Cardiac septum (tissue), 1 donor: ENCODE measurements at regions of chr17 and their contacts with region 1.

Region 1: DNA sequence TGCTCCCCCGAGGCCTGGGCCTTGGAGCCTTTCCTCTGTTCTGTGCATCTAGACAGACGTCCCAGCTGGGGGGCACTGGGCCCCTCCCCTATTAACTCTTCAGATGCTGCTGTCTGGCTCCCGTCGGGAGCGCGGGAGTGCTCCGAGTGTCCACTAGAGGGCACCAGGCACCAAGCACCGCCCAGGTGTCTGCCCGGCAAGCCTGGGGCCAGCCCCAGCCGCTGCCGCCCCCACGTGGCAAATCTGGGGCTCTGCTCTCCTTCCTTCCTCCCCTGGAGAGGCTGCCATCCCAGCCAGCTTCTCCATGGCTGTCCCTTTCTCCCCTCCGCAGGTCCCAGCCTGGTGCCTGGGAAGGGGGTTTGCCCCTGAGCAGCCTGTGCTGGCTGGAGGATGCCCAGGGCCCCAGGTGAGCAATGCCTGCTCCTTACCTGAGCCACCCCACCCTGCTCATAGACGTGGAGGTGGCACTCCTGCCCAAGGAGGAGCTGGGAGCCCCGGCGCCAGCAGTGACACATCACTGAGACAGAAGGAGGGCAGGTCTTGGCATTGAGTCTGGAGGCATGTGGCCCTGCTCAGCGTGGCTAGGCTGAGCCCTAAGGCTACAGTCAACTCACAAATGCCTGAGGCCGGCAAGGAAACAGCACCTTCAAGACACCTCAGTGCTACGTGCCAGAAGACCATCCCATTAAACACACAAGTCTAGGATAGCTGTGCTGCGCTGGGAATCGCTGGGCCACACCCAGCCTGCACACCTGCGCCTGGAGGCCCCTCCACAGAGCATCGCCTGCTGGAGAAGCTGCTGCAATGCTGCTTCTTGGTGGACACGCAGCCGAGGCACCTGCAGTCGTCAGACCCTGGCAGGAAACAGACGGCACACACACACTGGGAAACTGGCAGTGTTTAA is 19.7 kb downstream of the TMEM235 start:
- DNase-seq: peak; percentile 95

Region 2: DNA sequence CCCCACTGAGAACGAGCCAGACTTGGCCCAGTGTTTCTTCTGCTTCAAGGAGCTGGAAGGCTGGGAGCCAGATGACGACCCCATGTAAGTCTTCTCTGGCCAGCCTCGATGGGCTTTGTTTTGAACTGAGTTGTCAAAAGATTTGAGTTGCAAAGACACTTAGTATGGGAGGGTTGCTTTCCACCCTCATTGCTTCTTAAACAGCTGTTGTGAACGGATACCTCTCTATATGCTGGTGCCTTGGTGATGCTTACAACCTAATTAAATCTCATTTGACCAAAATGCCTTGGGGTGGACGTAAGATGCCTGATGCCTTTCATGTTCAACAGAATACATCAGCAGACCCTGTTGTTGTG is 36.5 kb before region 1 on chr17:
- intact Hi-C with region 1: loop called (anchors 1 kb)
- DNase-seq: no peak

Region 3: DNA sequence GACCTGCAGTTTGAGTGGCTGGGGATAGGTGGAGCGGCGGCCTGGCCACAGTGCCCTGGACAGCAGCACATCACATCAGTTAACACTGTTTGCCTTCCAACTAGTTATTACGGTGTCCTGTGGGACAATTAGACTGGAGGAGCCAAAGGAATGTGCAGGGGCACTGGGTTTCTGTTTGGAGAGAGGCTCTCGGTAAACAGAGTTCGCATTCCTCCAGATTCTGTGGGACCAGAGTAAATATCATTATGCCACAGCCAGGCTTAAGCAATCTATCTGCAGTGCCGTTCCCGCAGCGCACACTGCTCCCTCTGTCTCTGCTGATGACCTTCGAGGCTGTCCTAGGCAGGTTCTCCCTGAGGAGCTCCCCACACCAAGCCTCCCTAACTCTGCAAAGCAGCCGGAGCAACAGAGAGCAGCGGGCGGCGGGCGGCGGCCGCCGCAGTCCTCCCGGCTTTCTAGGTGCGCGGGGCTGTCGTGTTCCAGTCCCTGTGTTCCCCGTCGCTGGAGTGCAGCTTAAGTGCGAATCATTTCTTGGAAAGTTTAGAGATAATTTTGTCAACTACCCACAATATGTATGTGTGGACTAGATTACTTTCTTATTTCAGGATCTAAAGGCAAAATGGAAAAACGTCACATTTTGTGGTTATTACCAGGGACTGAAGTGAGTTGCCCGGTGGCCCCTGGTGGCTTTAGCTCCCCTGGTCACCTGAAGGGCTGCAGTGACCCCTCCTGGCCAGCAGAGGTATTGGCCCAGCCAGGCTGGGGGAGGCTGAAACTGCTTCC is 170.5 kb after region 1 on chr17:
- intact Hi-C with region 1: loop called (anchors 2 kb)
- DNase-seq: peak; percentile 93